ENCODE measurements at regions of chr20 and their contacts with region 1.

Region 1: GRCh38 chr20:32091888-32092346 is 17.6 kb upstream of the TM9SF4 start:
- DNase-seq: peak; percentile 81
- ATAC-seq: peak; percentile 97
- H3K4me3 ChIP-seq: no peak overlapping the region
- H3K4me3 Mint-ChIP-seq: no peak overlapping the region
- H3K27ac ChIP-seq: no peak overlapping the region
- H3K27ac Mint-ChIP-seq: no peak overlapping the region
- H3K4me1 ChIP-seq: peaks cover 0 to 8% of the 10 kb centered on the region in 2 donors
- H3K4me1 Mint-ChIP-seq: peaks cover 17% of the 10 kb centered on the region
- H3K27me3 ChIP-seq: no peaks in the 10 kb centered on the region
- H3K27me3 Mint-ChIP-seq: no peaks in the 10 kb centered on the region
- CTCF ChIP-seq: peak; percentile 96

Region 2: DNA sequence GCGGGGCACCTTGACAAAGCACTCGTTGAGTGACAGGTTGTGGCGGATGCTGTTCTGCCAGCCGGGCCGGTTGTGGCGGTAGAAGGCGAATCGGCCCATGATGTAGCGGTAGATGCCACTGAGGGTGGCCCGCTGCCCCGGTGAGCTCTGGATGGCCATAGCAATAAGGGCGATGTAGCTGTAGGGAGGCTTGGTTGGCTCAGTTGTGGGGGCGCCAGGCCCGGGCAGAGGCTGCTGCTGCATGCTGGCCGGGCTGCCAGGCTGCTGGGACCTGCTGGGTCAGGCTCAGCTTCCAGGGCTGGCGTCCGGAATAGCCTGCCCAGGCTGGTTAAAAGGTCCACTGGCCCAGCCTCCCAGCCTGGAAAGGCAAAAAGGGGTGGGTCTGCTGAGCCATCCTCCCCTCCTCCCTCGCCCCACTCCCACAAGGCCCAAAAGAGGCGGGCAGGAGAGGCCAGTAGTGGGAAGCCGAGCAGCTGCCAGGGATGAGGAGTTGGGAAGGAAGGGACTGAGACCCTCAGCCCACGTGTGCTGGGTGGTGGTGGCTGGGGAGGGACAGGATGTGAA is 246.5 kb before region 1 on chr20 and contains the start of gene FOXS1:
- CTCF ChIA-PET with region 1: interaction called, 11 read pairs
- POLR2A ChIA-PET with region 1: no interaction called
- intact Hi-C with region 1: no loop called
- DNase-seq: no peak
- ATAC-seq: no peak
- H3K4me3 ChIP-seq: no peak within 1 kb of the TSS
- H3K4me3 Mint-ChIP-seq: no peak within 1 kb of the TSS
- H3K27ac ChIP-seq: no peak within 1 kb of the TSS
- H3K27ac Mint-ChIP-seq: no peak within 1 kb of the TSS
- H3K4me1 ChIP-seq: peaks cover 0 to 6% of the 10 kb centered on the region in 2 donors
- H3K4me1 Mint-ChIP-seq: peaks cover 8% of the 10 kb centered on the region
- H3K27me3 ChIP-seq: peaks cover 0 to 3% (median 0%) of the 10 kb centered on the region in 4 experiments
- H3K27me3 Mint-ChIP-seq: peaks cover 13% of the 10 kb centered on the region
- CTCF ChIP-seq: no peak
- total RNA-seq, gene FOXS1: not detected in 2 replicates

Region 3: GRCh38 chr20:31856516-31856915 is 235.4 kb before region 1 on chr20:
- CTCF ChIA-PET with region 1: interaction called, 22 read pairs
- POLR2A ChIA-PET with region 1: no interaction called
- intact Hi-C with region 1: loop called (anchors 1 kb)
- DNase-seq: no peak
- ATAC-seq: no peak
- H3K4me3 ChIP-seq: no peak overlapping the region
- H3K4me3 Mint-ChIP-seq: no peak overlapping the region
- H3K27ac ChIP-seq: no peak overlapping the region
- H3K27ac Mint-ChIP-seq: no peak overlapping the region
- H3K4me1 ChIP-seq: peaks cover 19 to 23% of the 10 kb centered on the region in 2 donors
- H3K4me1 Mint-ChIP-seq: peaks cover 20% of the 10 kb centered on the region
- H3K27me3 ChIP-seq: peaks cover 0 to 31% (median 10%) of the 10 kb centered on the region in 4 experiments
- H3K27me3 Mint-ChIP-seq: peaks cover 6% of the 10 kb centered on the region
- CTCF ChIP-seq: no peak

Region 4: GRCh38 chr20:31968291-31969126 is 123.4 kb before region 1 on chr20:
- CTCF ChIA-PET with region 1: no interaction called
- POLR2A ChIA-PET with region 1: no interaction called
- intact Hi-C with region 1: loop called (anchors 5 kb)
- DNase-seq: peak; percentile 88
- ATAC-seq: peak; percentile 92
- H3K4me3 ChIP-seq: peak overlapping the region in 4 of 5 experiments; percentile 13 to 42 (median 28)
- H3K4me3 Mint-ChIP-seq: peak overlapping the region; percentile 90
- H3K27ac ChIP-seq: no peak overlapping the region
- H3K27ac Mint-ChIP-seq: no peak overlapping the region
- H3K4me1 ChIP-seq: peaks cover 6 to 11% of the 10 kb centered on the region in 2 donors
- H3K4me1 Mint-ChIP-seq: peaks cover 11% of the 10 kb centered on the region
- H3K27me3 ChIP-seq: peaks cover 0 to 48% (median 18%) of the 10 kb centered on the region in 4 experiments
- H3K27me3 Mint-ChIP-seq: peaks cover 63% of the 10 kb centered on the region
- CTCF ChIP-seq: no peak

Region 5: GRCh38 chr20:32031007-32031958 is 60.6 kb before region 1 on chr20:
- CTCF ChIA-PET with region 1: interaction called, 389 read pairs
- POLR2A ChIA-PET with region 1: no interaction called
- intact Hi-C with region 1: loop called (anchors 1 kb)
- DNase-seq: peak; percentile 78
- ATAC-seq: peak; percentile 75
- H3K4me3 ChIP-seq: peak overlapping the region in 4 of 5 experiments; percentile 18 to 55 (median 40)
- H3K4me3 Mint-ChIP-seq: peak overlapping the region; percentile 65
- H3K27ac ChIP-seq: no peak overlapping the region
- H3K27ac Mint-ChIP-seq: no peak overlapping the region
- H3K4me1 ChIP-seq: peaks cover 7 to 25% of the 10 kb centered on the region in 2 donors
- H3K4me1 Mint-ChIP-seq: peaks cover 22% of the 10 kb centered on the region
- H3K27me3 ChIP-seq: peaks cover 0 to 21% (median 9%) of the 10 kb centered on the region in 4 experiments
- H3K27me3 Mint-ChIP-seq: peaks cover 35% of the 10 kb centered on the region
- CTCF ChIP-seq: peak; percentile 100

Region 6: DNA sequence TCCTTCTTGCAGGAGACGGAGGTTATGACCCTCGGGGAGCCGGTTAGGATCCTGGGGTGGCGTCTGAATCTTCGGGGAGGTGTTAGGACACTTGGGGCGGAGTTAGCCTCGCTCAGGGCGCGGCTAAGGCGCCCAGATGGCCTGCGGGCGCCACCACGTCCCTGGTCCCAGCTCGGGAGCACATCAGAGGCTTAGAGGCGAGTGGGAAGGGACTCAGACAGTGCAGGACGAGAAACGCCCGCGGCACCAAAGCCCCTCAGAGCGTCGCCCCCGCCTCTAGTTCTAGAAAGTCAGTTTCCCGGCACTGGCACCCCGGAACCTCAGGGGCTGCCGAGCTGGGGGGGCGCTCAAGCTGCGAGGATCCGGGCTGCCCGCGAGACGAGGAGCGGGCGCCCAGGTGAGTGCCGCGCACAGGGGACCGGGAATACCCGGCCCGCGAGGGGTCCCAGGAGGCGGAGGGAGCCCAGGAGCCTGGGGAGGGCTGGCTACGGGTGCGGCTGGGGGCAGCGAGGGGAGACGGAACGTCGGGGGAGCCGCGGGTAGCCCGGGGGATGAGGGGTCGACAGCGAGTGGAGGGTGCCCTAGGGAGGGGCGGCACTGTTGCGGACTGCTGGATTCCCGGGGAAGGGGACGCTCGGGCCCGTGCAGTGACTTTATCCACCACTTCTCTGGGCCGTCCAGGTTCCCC is 39.7 kb before region 1 on chr20 and contains the start of gene HCK:
- CTCF ChIA-PET with region 1: interaction called, 16 read pairs
- POLR2A ChIA-PET with region 1: no interaction called
- intact Hi-C with region 1: no loop called
- DNase-seq: peak; percentile 54
- ATAC-seq: peak; percentile 44
- H3K4me3 ChIP-seq: peak within 1 kb of the TSS; percentile 35 to 93 (median 77)
- H3K4me3 Mint-ChIP-seq: peak within 1 kb of the TSS; percentile 90
- H3K27ac ChIP-seq: peak within 1 kb of the TSS; percentile 76 to 82
- H3K27ac Mint-ChIP-seq: peak within 1 kb of the TSS; percentile 90
- H3K4me1 ChIP-seq: peaks cover 33 to 55% of the 10 kb centered on the region in 2 donors
- H3K4me1 Mint-ChIP-seq: peaks cover 45% of the 10 kb centered on the region
- H3K27me3 ChIP-seq: peaks cover 0 to 3% (median 0%) of the 10 kb centered on the region in 4 experiments
- H3K27me3 Mint-ChIP-seq: no peaks in the 10 kb centered on the region
- CTCF ChIP-seq: no peak
- total RNA-seq, gene HCK: 48.1 and 48.6 TPM in 2 replicates

Region 7: DNA sequence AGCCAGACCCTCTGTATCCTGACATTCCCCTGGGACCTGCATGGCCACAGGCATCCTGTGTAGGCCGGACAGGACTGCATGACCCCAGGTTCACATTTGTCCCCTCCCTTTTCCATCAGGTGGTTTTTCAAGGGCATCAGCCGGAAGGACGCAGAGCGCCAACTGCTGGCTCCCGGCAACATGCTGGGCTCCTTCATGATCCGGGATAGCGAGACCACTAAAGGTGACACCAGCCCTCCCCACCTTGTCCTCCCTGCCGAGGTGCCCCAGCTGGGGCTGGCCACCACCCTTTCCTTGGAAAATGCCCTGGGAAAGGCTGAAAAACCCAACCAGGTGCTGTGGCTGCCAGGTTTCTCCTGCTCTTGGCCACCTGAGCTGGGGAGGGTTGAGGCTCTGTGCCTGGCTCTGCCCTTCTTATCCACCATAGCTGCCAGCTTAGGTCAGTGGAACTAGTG is 12.2 kb before region 1 on chr20:
- CTCF ChIA-PET with region 1: interaction called, 36 read pairs
- POLR2A ChIA-PET with region 1: no interaction called
- intact Hi-C with region 1: no loop called
- DNase-seq: no peak
- ATAC-seq: no peak
- H3K4me3 ChIP-seq: no peak overlapping the region
- H3K4me3 Mint-ChIP-seq: no peak overlapping the region
- H3K27ac ChIP-seq: no peak overlapping the region
- H3K27ac Mint-ChIP-seq: no peak overlapping the region
- H3K4me1 ChIP-seq: no peaks in the 10 kb centered on the region
- H3K4me1 Mint-ChIP-seq: peaks cover 3% of the 10 kb centered on the region
- H3K27me3 ChIP-seq: no peaks in the 10 kb centered on the region
- H3K27me3 Mint-ChIP-seq: no peaks in the 10 kb centered on the region
- CTCF ChIP-seq: no peak

Measured in B cell (primary cell).